Activated naive CD4-positive, alpha-beta T cell treated with anti-CD3 and anti-CD28 coated beads, Interleukin-2, amount 10 ng/mL, durations not matched to agents 7 days and 5 days (primary cell): ENCODE measurements at regions of chr14 and their contacts with region 1.

Region 1: DNA sequence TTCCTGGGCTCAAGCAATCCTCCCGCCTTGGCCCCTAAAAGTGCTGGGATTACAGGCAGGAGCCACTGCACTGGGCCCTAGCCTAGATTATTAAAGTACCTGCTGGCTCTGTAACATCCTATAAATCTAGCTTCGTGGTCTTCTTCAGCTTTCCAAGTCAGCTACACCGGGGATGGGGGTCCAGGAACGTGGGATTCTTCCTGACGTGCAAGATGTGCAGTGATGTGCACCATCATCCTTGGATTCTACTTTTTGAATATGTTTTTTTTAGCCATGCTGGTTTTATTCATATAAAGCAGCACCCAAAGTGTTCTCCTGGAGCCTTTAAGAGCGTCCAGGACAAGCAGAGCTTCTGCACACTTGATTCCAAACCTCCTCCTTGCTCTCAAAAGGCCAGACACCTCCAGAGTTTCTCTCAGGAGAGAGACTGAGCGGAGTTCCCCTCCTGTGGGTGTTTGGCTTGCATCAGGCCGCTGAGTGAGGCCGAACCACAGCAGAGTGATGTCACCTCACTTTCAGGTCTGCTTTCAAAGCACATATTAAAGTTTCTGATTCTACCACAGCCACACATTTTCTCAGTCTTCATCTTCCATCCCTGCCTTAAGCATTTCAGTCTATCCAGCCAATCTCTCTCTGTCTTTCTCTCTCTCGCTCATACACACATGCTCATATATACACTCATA is 33.4 kb downstream of the VCPKMT start:
- DNase-seq: peak; percentile 91
- H3K4me3 Mint-ChIP-seq: peak overlapping the region; percentile 73
- H3K27ac Mint-ChIP-seq: peak overlapping the region; percentile 97
- H3K4me1 Mint-ChIP-seq: peaks cover 76% of the 10 kb centered on the region
- H3K27me3 Mint-ChIP-seq: no peaks in the 10 kb centered on the region

Region 2: GRCh38 chr14:49820176-49820575 is 262.7 kb before region 1 on chr14:
- CTCF ChIA-PET with region 1: no interaction called
- DNase-seq: no peak
- H3K4me3 Mint-ChIP-seq: no peak overlapping the region
- H3K27ac Mint-ChIP-seq: peak overlapping the region; percentile 42
- H3K4me1 Mint-ChIP-seq: no peaks in the 10 kb centered on the region
- H3K27me3 Mint-ChIP-seq: no peaks in the 10 kb centered on the region

Region 3: DNA sequence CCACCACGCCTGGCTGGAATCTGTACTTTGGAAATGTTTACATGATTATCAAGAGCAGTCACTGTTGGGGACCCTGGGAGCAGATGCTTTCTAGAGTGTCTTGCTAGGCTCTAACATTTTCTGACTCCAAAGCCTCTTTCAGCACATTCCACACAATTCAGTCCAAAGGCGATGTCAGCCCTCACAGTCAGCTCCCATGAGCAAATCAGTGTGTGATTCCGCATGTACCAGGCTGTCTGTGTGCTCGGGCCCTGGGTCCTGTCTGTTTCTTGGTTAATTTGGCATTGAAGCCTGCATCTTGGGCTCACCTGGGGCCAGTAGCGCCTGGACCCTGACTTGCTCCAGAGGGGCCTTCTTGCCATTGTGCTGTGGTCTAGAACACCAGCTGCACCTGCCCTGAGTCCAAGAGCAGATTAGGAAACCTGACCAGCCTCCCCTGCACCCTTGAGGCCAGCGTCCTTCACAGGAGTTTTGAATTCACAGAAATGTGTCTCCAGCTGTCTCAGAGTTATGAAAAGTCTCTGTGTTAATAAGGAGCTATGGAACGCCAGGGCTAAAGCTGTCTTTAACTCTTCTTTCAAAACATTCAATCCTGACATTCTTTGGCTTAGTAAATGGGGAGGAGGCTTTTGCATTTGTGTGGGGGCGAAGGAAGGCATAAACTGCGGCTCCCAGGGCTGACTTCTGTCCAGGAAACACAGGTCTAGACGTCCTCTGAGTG is 87.9 kb before region 1 on chr14:
- CTCF ChIA-PET with region 1: no interaction called
- DNase-seq: no peak
- H3K4me3 Mint-ChIP-seq: no peak overlapping the region
- H3K27ac Mint-ChIP-seq: no peak overlapping the region
- H3K4me1 Mint-ChIP-seq: peaks cover 52% of the 10 kb centered on the region
- H3K27me3 Mint-ChIP-seq: no peaks in the 10 kb centered on the region

Region 4: DNA sequence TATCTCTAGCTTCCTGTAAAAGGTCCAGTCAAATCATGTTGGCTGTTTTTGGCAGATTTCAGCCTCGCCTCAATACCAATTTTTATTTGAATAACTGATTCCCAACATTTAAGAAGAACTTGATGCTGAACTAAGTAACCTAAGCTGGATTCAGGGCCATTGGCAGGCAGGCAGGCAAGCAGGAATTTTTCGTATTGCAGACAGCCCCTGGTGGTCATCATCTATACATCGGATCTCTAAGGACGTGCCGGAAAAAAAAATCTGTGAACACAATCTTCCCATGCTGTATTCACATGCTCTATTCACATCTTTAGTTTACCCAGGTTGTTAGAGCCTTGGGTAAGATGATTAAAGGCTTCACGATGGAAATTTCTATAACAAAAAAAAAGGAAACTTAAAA is 26.4 kb after region 1 on chr14:
- CTCF ChIA-PET with region 1: interaction called, 12 read pairs
- DNase-seq: no peak
- H3K4me3 Mint-ChIP-seq: no peak overlapping the region
- H3K27ac Mint-ChIP-seq: no peak overlapping the region
- H3K4me1 Mint-ChIP-seq: peaks cover 28% of the 10 kb centered on the region
- H3K27me3 Mint-ChIP-seq: no peaks in the 10 kb centered on the region

Region 5: DNA sequence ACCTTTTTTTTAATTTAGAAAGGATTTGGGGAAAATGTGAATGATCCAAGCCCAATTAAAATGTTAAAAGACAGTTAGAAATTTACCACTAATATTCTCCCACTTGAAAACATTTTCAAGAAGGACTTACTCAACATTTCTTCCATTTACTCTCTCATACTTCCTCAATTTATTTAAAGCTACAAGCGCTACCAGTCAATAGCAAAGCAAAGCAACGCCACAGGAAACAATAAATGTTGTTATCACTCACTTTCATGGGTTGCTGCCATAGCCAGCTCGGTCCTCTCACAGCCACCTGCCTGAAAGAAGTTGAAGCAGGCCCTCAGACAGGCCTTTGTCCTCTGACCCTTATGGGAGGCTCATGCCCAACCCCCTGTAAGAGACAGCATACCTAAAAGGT is 154.5 kb after region 1 on chr14:
- CTCF ChIA-PET with region 1: no interaction called
- DNase-seq: no peak
- H3K4me3 Mint-ChIP-seq: no peak overlapping the region
- H3K27ac Mint-ChIP-seq: no peak overlapping the region
- H3K4me1 Mint-ChIP-seq: peaks cover 15% of the 10 kb centered on the region
- H3K27me3 Mint-ChIP-seq: peaks cover 5% of the 10 kb centered on the region